HEK293T (cell line): ENCODE measurements at regions of chr10 and their contacts with region 1.

Region 1: GRCh38 chr10:29535012-29535777 is 99.6 kb downstream of the SVIL start:
- DNase-seq: peak; percentile 72

Region 2: DNA sequence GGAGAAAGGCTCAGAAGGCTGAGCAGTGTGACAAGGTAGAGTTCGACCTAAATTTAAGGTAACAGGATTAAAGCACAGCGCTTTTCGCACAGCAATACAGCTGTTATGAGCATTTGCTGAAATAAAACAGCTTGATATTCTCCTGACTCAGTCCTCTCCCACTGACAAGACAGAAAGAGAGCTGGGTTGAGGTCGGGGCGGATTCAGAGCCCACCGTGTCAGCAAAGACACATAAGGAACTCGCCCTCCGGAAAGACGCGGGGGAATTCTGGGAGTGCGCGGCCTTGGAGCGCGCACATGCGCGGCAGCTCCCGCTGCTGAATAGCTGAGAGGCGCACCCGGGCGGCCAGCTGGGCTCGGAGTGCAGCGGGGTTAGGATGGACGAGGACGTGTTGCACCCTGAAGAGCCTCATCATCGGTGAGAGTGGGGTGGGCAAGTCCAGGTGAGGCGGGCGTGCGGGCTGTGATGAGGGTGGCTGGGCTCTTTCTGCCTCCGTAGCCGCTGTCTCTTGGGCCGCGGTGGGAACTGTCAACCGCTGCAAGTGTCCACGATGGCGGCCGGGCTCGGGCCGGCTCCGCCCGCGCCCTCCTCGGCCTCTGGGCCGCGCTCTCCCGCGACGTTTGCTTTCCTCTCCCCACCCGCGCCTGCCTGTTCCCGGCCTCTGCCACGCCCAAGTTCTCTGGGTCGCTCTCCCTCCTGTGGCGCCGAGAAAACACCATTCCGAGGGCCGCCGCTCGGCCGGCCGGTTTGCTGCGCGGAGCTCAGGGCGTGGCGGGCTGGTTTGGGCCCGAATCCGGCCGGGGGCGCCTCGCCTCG is 125.7 kb before region 1 on chr10:
- CTCF ChIA-PET with region 1: no interaction called
- POLR2A ChIA-PET with region 1: no interaction called
- DNase-seq: peak; percentile 61

Region 3: GRCh38 chr10:29455095-29455494 is 80.1 kb before region 1 on chr10:
- CTCF ChIA-PET with region 1: no interaction called
- POLR2A ChIA-PET with region 1: no interaction called
- DNase-seq: no peak

Region 4: GRCh38 chr10:29517352-29517923 is 17.8 kb before region 1 on chr10:
- CTCF ChIA-PET with region 1: interaction called, 12 read pairs
- POLR2A ChIA-PET with region 1: no interaction called
- DNase-seq: peak; percentile 42

Region 5: GRCh38 chr10:29524294-29524693 is 10.9 kb before region 1 on chr10:
- CTCF ChIA-PET with region 1: interaction called, 12 read pairs
- POLR2A ChIA-PET with region 1: no interaction called
- DNase-seq: no peak

Region 6: DNA sequence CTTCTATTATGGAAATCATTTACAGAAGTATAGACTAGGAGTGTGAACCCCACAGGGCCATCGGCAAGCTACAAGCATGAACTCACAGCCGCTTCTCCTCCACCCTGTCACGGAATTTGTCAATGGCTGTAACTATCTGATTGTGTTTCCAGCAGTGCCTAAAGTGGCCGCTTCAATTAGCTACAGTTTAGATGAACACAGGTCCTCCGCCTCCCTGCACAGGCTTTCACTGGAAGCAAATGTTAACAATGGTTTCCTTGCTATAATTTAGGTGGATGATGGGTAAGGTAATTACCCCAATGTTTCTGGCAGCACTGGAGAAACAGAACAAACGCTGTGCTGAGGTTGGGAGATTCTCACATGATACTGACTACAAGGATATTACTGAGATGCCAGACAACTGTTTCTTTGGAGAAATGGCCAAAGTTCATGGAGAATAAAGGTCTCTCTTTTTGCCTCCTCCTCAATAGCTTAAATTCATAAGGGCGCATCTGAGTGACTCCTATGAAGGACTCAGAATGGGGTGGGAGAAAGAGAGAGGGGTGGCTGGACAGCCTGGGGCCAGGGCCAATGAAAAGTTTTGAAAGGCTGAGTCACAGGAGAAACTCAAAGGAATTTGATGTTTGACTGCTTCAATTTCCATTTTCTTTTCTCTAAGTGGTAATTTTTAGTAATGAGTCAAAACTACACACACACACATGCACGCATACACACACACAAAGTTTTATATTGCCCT is 20.7 kb after region 1 on chr10:
- CTCF ChIA-PET with region 1: interaction called, 18 read pairs
- POLR2A ChIA-PET with region 1: no interaction called
- DNase-seq: no peak

Region 7: DNA sequence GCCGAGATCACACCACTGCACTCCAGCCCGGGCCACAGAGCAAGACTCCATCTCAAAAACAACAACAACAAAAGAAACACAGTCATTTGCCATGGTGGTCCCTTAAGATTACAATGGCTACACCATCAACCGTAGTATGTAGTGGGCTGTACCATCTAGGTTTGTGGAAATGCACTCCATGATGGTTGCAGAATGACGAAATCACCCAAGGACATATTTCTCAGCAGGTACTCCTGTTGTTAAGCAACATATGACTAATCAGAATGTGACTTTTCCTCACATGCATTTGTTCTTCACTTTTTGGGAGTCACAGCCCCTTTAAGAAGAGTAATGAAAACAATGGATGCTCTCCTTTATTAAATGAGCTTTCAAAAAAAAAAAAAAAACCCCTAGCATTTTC is 88.6 kb after region 1 on chr10:
- CTCF ChIA-PET with region 1: no interaction called
- POLR2A ChIA-PET with region 1: no interaction called
- DNase-seq: no peak

Region 8: GRCh38 chr10:29874606-29875269 is 339.5 kb after region 1 on chr10:
- CTCF ChIA-PET with region 1: no interaction called
- POLR2A ChIA-PET with region 1: no interaction called
- DNase-seq: no peak